GM18951 (cell line): ENCODE measurements at regions of chr17 and their contacts with region 1.

Region 1: GRCh38 chr17:35747540-35748017 is 5.5 kb downstream of the GAS2L2 start:
- POLR2A ChIP-seq: no peak

Region 2: DNA sequence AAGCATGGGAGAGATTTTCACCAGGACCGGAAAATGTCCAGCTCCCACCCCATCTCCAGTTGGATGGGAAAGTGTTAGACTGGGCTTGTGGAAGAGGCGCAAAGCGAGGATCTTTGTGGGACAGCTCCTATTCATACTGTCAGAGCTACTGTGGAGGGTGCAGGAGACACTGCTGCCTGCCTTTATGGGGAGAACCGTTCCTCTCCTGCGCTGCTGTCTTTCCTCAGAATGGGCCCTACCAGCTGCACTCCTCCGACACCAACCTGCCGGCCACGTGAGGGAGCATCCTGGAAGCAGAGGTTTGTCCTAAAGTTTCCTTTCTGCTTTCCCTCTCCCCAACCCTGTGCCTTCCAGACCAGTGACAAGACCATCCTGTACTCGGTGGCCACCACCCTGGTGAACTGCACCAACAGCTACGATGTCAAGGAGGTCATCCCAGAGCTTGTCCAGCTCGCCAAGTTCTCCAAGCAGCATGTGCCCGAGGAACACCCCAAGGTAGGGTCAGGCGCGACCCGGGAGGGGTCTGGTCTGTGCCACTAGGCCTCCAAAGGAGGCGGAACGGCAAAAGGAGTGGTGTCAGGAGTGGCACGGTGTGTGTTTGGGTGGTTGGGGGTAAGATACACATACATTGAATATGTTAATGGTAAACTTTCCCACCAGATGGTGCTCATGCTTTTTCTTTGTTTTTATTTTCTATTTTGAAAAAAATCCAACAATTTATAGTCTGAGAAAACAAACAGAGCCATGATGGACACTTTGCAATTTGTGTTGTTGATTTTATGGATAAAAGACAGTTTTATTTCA is 576.4 kb before region 1 on chr17:
- in situ Hi-C with region 1: loop called (anchors 25 kb)
- POLR2A ChIP-seq: no peak

Region 3: DNA sequence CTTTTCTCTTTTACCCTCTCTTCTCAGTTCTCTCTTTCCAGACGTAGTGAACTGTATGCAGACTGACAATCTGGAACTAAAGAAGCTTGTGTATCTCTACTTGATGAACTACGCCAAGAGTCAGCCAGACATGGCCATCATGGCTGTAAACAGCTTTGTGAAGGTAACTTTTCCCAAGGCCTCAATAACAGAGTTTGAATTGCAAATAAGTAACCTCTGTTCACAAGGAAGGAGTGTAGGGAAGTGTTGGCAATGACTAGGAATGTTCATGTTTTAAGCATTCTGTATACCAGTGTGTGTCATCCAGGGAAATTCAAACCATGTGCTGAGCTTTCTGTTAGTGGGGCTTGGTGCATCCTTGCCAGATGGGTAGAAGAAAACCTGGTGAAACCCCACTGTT is 141.9 kb before region 1 on chr17:
- in situ Hi-C with region 1: loop called (anchors 10 kb)
- POLR2A ChIP-seq: no peak

Region 4: DNA sequence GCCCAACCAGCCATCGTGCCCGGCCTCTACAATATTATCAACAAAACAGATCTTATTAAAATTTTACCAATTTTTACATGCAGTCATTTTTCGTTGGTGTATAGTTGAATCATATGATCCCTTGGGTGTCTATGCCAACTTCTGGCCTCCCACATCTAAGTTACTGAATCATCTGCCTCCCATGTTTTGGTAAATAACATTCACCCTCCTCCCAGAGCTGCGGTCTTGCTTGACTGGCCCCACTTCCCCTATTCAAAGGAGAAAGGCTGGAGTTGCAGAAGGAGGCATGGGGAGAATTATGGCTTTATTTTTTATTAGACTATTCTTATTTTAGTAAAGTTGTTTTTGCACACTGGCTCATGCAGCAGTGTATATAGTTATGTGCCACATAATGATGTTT is 288.7 kb after region 1 on chr17:
- in situ Hi-C with region 1: no loop called
- POLR2A ChIP-seq: no peak